Tibial artery (tissue), 4 donors: ENCODE measurements at regions of chr17 and their contacts with region 1.

Region 1: GRCh38 chr17:28916302-28916934 is 13.5 kb upstream of the DHRS13 start:
- DNase-seq: peak in 1 of 2 donors; percentile 51
- H3K4me3 ChIP-seq: no peak overlapping the region
- H3K27ac ChIP-seq: no peak overlapping the region
- H3K4me1 ChIP-seq: no peaks in the 10 kb centered on the region
- H3K27me3 ChIP-seq: no peaks in the 10 kb centered on the region
- CTCF ChIP-seq: peak; percentile 62 to 72

Region 2: GRCh38 chr17:28763804-28764266 is 152.6 kb before region 1 on chr17:
- intact Hi-C with region 1: loop called (anchors 5 kb)
- DNase-seq: peak; percentile 81 to 93
- H3K4me3 ChIP-seq: no peak overlapping the region
- H3K27ac ChIP-seq: no peak overlapping the region
- H3K4me1 ChIP-seq: peaks cover 0 to 11% (median 0%) of the 10 kb centered on the region in 4 donors
- H3K27me3 ChIP-seq: no peaks in the 10 kb centered on the region
- CTCF ChIP-seq: peak; percentile 89 to 92

Region 3: GRCh38 chr17:29078183-29079045 is 162.0 kb after region 1 on chr17:
- intact Hi-C with region 1: no loop called
- DNase-seq: no peak
- H3K4me3 ChIP-seq: no peak overlapping the region
- H3K27ac ChIP-seq: no peak overlapping the region
- H3K4me1 ChIP-seq: no peaks in the 10 kb centered on the region
- H3K27me3 ChIP-seq: no peaks in the 10 kb centered on the region
- CTCF ChIP-seq: no peak